ENCODE measurements at regions of chr11 and their contacts with region 1.

Region 1: DNA sequence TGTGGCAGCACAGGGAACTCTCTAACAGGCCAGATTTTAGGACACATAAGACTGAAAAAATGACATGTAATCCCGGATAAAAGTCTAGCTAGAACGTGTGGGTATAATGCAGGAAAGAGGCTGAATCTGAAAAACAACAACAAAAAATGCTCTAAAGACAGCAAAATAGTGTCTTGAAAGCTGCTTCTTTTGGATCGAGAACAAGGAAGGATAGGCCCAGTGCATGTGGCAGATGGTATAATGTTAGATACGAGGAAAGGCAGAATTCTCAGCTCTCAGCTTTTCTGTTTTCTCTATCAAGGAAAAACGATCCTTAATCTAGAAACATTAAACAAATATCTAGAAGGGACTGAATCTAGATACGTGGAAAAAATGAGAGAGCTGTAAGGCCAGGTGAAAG is 33.8 kb upstream of the PARVA start:
- DNase-seq: no peak
- H3K4me3 ChIP-seq: no peak overlapping the region
- H3K27ac ChIP-seq: no peak overlapping the region
- H3K4me1 ChIP-seq: no peaks in the 10 kb centered on the region
- H3K27me3 ChIP-seq: no peaks in the 10 kb centered on the region
- CTCF ChIP-seq: no peak
- EP300 ChIP-seq: no peak
- POLR2A ChIP-seq: no peak

Region 2: GRCh38 chr11:12043959-12044819 is 299.3 kb before region 1 on chr11:
- in situ Hi-C with region 1: no loop called
- intact Hi-C with region 1: no loop called
- DNase-seq: peak; percentile 73
- H3K4me3 ChIP-seq: no peak overlapping the region
- H3K27ac ChIP-seq: peak overlapping the region; percentile 36 to 66 (median 40)
- H3K4me1 ChIP-seq: peaks cover 0 to 15% (median 9%) of the 10 kb centered on the region in 4 donors
- H3K27me3 ChIP-seq: no peaks in the 10 kb centered on the region
- CTCF ChIP-seq: peak; percentile 87 to 96 (median 88)
- EP300 ChIP-seq: peak; percentile 50
- POLR2A ChIP-seq: no peak

Region 3: GRCh38 chr11:12303421-12304149 is 39.9 kb before region 1 on chr11:
- in situ Hi-C with region 1: no loop called
- intact Hi-C with region 1: loop called (anchors 2 kb)
- DNase-seq: no peak
- H3K4me3 ChIP-seq: no peak overlapping the region
- H3K27ac ChIP-seq: no peak overlapping the region
- H3K4me1 ChIP-seq: no peaks in the 10 kb centered on the region
- H3K27me3 ChIP-seq: no peaks in the 10 kb centered on the region
- CTCF ChIP-seq: no peak
- EP300 ChIP-seq: no peak
- POLR2A ChIP-seq: no peak